Activated CD4-positive, alpha-beta memory T cell treated with anti-CD3 and anti-CD28 coated beads for 36 hours (primary cell): ENCODE measurements at regions of chr1 and their contacts with region 1.

Region 1: GRCh38 chr1:159798893-159799292 is 3.3 kb upstream of the FCRL6 start:
- DNase-seq: peak; percentile 61
- H3K4me3 Mint-ChIP-seq: no peak overlapping the region
- H3K27ac Mint-ChIP-seq: no peak overlapping the region
- H3K4me1 Mint-ChIP-seq: peaks cover 13% of the 10 kb centered on the region
- H3K27me3 Mint-ChIP-seq: peaks cover 3% of the 10 kb centered on the region

Region 2: GRCh38 chr1:159780583-159781582 is 18.0 kb before region 1 on chr1 and contains the start of gene DUSP23:
- CTCF ChIA-PET with region 1: interaction called, 26 read pairs
- POLR2A ChIA-PET with region 1: no interaction called
- intact Hi-C with region 1: loop called (anchors 1 kb)
- DNase-seq: peak; percentile 98
- H3K4me3 Mint-ChIP-seq: peak within 1 kb of the TSS; percentile 78
- H3K27ac Mint-ChIP-seq: peak within 1 kb of the TSS; percentile 25
- H3K4me1 Mint-ChIP-seq: peaks cover 5% of the 10 kb centered on the region
- H3K27me3 Mint-ChIP-seq: no peaks in the 10 kb centered on the region
- total RNA-seq, gene DUSP23: 26.9 to 28.3 TPM

Region 3: DNA sequence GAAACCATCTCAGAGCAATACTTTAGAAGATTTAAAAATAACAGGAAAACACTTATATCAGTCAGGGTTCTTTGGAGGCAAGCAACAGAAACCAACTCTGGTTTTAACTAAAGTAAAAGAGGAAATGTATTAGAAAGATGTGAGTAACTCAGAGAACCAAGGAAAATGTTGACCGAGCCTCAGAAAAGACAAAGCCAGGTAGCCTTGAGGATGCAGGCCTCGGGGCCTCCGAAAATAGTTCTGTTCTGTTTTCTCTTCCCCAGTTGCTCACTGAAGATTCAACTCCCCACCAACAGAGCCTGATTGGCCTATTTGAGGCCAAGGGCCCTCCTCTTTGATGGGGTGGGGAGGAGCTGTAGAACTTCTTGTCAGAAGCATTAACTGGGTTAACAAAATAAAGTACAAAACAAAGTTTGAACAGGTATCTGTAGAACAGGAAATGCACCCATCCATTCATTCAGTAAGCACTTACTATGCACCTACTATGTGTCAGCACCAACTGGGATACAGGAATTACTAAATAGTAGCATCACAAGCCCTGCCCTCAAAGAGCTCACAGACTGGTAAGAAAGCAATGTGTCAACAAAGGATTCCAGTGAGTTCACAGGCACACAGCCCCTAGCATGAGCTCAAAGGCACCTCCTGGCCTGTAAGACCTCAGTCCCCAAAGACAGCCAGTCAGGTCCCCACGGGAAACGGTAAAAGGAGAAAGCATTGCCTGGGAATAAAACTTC is 40.4 kb after region 1 on chr1:
- CTCF ChIA-PET with region 1: interaction called, 3 read pairs
- POLR2A ChIA-PET with region 1: no interaction called
- intact Hi-C with region 1: loop called (anchors 2 kb)
- DNase-seq: no peak
- H3K4me3 Mint-ChIP-seq: no peak overlapping the region
- H3K27ac Mint-ChIP-seq: peak overlapping the region; percentile 57
- H3K4me1 Mint-ChIP-seq: peaks cover 19% of the 10 kb centered on the region
- H3K27me3 Mint-ChIP-seq: no peaks in the 10 kb centered on the region

Region 4: DNA sequence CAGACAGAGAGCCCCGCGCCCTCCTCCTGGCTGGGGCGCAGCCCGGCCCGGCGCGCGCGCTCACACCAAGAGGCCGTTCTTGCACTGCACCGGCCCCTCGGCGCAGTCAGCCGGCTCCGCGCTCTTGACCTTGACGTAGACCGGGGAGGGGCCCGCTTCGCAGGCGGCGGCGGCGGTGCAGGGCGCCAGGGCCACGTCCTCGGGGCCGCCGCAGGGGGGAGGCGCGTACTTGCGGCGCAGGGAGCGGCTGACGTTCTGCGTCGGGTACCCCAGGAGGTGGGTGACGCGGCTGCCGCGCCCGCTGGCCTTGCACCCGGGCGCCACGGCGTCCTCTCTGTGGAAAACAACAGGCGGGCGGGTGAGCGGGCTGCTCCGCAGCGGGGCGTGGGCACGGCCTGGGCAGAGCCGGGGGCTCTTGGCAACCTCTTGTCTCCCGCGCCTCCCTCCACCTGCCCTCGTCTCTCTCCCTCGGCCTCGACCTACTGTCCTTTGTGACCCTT is 55.9 kb after region 1 on chr1:
- CTCF ChIA-PET with region 1: interaction called, 10 read pairs
- POLR2A ChIA-PET with region 1: no interaction called
- intact Hi-C with region 1: no loop called
- DNase-seq: peak; percentile 86
- H3K4me3 Mint-ChIP-seq: peak overlapping the region; percentile 79
- H3K27ac Mint-ChIP-seq: peak overlapping the region; percentile 3
- H3K4me1 Mint-ChIP-seq: peaks cover 10% of the 10 kb centered on the region
- H3K27me3 Mint-ChIP-seq: no peaks in the 10 kb centered on the region

Region 5: DNA sequence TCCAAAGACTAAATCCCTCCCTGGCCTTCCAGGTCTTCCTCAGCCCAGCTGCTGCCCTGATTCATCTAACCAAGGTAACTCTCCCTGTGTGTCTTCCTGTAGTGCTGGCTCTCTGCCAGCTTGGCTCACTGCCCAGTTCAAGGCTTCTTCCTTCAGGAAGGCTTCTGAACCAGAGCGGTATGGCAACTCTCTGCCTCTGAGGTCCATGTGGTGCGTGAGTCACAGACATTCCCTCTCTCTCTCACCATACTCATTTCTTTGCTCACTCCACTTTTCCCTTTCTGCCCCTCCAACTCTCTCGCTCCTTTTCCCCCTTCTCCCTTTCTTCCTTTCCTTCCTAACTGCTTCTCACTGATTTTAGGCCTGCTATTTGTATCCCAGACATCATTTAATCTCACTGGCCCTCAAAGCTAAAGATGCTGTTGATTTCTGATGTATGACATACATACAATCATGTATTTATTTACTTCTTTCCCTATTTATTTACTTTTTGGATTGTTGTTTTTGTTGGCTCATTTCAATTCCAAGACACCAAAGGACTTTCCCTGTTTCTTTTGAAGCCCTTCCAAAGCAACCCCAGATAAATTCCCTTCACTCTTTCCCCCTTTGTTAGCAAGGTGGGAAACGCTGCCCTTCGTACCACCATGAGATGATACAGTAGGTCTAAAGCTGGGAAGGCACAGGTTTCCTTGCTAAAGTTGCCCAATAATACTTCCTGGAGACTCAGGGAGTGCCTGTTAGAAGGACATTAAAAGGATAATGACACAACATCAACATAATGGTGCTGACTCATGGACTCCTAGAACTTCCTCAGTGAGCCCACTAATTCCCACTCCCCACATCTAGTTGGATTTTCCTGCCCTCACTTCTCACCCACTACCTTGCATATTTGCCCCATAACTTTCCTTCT is 83.3 kb after region 1 on chr1:
- CTCF ChIA-PET with region 1: interaction called, 431 read pairs
- POLR2A ChIA-PET with region 1: no interaction called
- intact Hi-C with region 1: no loop called
- DNase-seq: peak; percentile 53
- H3K4me3 Mint-ChIP-seq: no peak overlapping the region
- H3K27ac Mint-ChIP-seq: no peak overlapping the region
- H3K4me1 Mint-ChIP-seq: no peaks in the 10 kb centered on the region
- H3K27me3 Mint-ChIP-seq: no peaks in the 10 kb centered on the region